Body of pancreas (tissue), 4 donors: ENCODE measurements at regions of chr22 and their contacts with region 1.

Region 1: GRCh38 chr22:17945888-17946648 is 78.3 kb downstream of the MICAL3 start:
- DNase-seq: no peak
- ATAC-seq: no peak
- H3K4me3 ChIP-seq: no peak overlapping the region
- H3K27ac ChIP-seq: peak overlapping the region in 3 of 4 donors; percentile 48 to 61 (median 51)
- H3K4me1 ChIP-seq: peaks cover 46% of the 10 kb centered on the region
- H3K27me3 ChIP-seq: no peaks in the 10 kb centered on the region
- CTCF ChIP-seq: no peak
- POLR2A ChIP-seq: no peak

Region 2: GRCh38 chr22:17897426-17897825 is 48.6 kb before region 1 on chr22:
- intact Hi-C with region 1: loop called (anchors 5 kb)
- DNase-seq: no peak
- ATAC-seq: no peak
- H3K4me3 ChIP-seq: no peak overlapping the region
- H3K27ac ChIP-seq: no peak overlapping the region
- H3K4me1 ChIP-seq: no peaks in the 10 kb centered on the region
- H3K27me3 ChIP-seq: no peaks in the 10 kb centered on the region
- CTCF ChIP-seq: no peak
- POLR2A ChIP-seq: no peak

Region 3: GRCh38 chr22:18078329-18079041 is 132.4 kb after region 1 on chr22:
- intact Hi-C with region 1: no loop called
- DNase-seq: peak; percentile 53 to 64 (median 62)
- ATAC-seq: peak; percentile 46
- H3K4me3 ChIP-seq: peak overlapping the region; percentile 98 to 99
- H3K27ac ChIP-seq: peak overlapping the region in 3 of 4 donors; percentile 61 to 88 (median 81)
- H3K4me1 ChIP-seq: peaks cover 27% of the 10 kb centered on the region
- H3K27me3 ChIP-seq: no peaks in the 10 kb centered on the region
- CTCF ChIP-seq: no peak
- POLR2A ChIP-seq: no peak